Activated CD8-positive, alpha-beta T cell treated with anti-CD3 and anti-CD28 coated beads for 36 hours (primary cell): ENCODE measurements at regions of chr1 and their contacts with region 1.

Region 1: GRCh38 chr1:248807067-248807737 is 18.5 kb downstream of the SH3BP5L start:
- DNase-seq: peak; percentile 66
- ATAC-seq: peak; percentile 92
- H3K4me3 Mint-ChIP-seq: no peak overlapping the region
- H3K27ac Mint-ChIP-seq: no peak overlapping the region
- H3K4me1 Mint-ChIP-seq: peaks cover 11% of the 10 kb centered on the region
- H3K27me3 Mint-ChIP-seq: peaks cover 10% of the 10 kb centered on the region
- CTCF ChIP-seq: peak; percentile 91

Region 2: GRCh38 chr1:248404024-248404423 is 403.2 kb before region 1 on chr1:
- CTCF ChIA-PET with region 1: interaction called, 27 read pairs
- POLR2A ChIA-PET with region 1: no interaction called
- intact Hi-C with region 1: loop called (anchors 2 kb)
- DNase-seq: no peak
- ATAC-seq: no peak
- H3K4me3 Mint-ChIP-seq: no peak overlapping the region
- H3K27ac Mint-ChIP-seq: no peak overlapping the region
- H3K4me1 Mint-ChIP-seq: no peaks in the 10 kb centered on the region
- H3K27me3 Mint-ChIP-seq: no peaks in the 10 kb centered on the region
- CTCF ChIP-seq: peak; percentile 42

Region 3: DNA sequence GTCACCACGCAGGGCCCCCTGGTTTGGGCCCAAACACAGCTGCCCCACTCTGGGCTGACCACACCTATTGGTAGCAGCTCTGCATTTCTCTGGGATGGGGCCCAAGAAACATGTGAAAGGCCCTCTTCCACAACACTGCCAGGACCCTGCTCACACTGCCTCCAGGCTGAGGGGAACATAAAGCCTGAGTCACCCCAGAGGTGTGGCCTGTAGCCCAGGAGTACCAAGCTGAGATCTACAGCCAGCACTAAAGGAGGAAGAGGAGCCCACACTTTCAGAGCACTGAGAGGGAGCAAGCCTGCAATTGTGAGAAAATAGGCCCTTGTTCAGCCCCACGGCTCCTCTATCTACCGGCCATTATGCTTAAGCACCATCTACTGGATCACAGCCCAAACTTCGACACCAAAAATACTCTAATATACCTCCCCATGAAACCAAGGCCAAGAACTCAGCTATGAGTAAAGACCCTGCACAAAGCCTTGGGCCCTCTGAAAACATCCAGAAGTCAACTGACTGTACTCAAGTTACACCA is 195.3 kb before region 1 on chr1:
- CTCF ChIA-PET with region 1: interaction called, 15 read pairs
- POLR2A ChIA-PET with region 1: no interaction called
- intact Hi-C with region 1: no loop called
- DNase-seq: peak; percentile 62
- ATAC-seq: peak; percentile 95
- H3K4me3 Mint-ChIP-seq: no peak overlapping the region
- H3K27ac Mint-ChIP-seq: peak overlapping the region; percentile 56
- H3K4me1 Mint-ChIP-seq: peaks cover 29% of the 10 kb centered on the region
- H3K27me3 Mint-ChIP-seq: no peaks in the 10 kb centered on the region
- CTCF ChIP-seq: no peak

Region 4: GRCh38 chr1:248779350-248779749 is 27.9 kb before region 1 on chr1:
- CTCF ChIA-PET with region 1: no interaction called
- POLR2A ChIA-PET with region 1: no interaction called
- intact Hi-C with region 1: no loop called
- DNase-seq: no peak
- ATAC-seq: no peak
- H3K4me3 Mint-ChIP-seq: no peak overlapping the region
- H3K27ac Mint-ChIP-seq: no peak overlapping the region
- H3K4me1 Mint-ChIP-seq: no peaks in the 10 kb centered on the region
- H3K27me3 Mint-ChIP-seq: peaks cover 11% of the 10 kb centered on the region
- CTCF ChIP-seq: no peak